Naive thymus-derived CD4-positive, alpha-beta T cell (primary cell): ENCODE measurements at regions of chr11 and their contacts with region 1.

Region 1: GRCh38 chr11:36289226-36289852 is at the start of gene COMMD9:
- DNase-seq: peak; percentile 78 to 93 (median 91)
- ATAC-seq: peak; percentile 98
- H3K4me3 ChIP-seq: peak within 1 kb of the TSS; percentile 98
- H3K4me3 Mint-ChIP-seq: peak within 1 kb of the TSS; percentile 87 to 99 (median 94)
- H3K27ac ChIP-seq: peak within 1 kb of the TSS; percentile 58
- H3K27ac Mint-ChIP-seq: peak within 1 kb of the TSS; percentile 85 to 98 (median 90)
- H3K4me1 ChIP-seq: peaks cover 6 to 14% of the 10 kb centered on the region in 2 donors
- H3K4me1 Mint-ChIP-seq: peaks cover 24 to 55% (median 42%) of the 10 kb centered on the region in 7 donors
- H3K27me3 ChIP-seq: no peaks in the 10 kb centered on the region
- H3K27me3 Mint-ChIP-seq: no peaks in the 10 kb centered on the region
- total RNA-seq, gene COMMD9: 42.6 to 62.2 (median 45.9) TPM

Region 2: GRCh38 chr11:36354221-36355003 is 65.1 kb after region 1 on chr11:
- CTCF ChIA-PET with region 1: no interaction called
- POLR2A ChIA-PET with region 1: no interaction called
- intact Hi-C with region 1: loop called in 1 of 2 experiments (anchors 1 kb)
- DNase-seq: no peak
- ATAC-seq: no peak
- H3K4me3 ChIP-seq: no peak overlapping the region
- H3K4me3 Mint-ChIP-seq: peak overlapping the region in 1 of 10 donors; percentile 45
- H3K27ac ChIP-seq: no peak overlapping the region
- H3K27ac Mint-ChIP-seq: peak overlapping the region in 1 of 9 donors; percentile 18
- H3K4me1 ChIP-seq: peaks cover 0 to 36% of the 10 kb centered on the region in 2 donors
- H3K4me1 Mint-ChIP-seq: peaks cover 0 to 56% (median 4%) of the 10 kb centered on the region in 7 donors
- H3K27me3 ChIP-seq: no peaks in the 10 kb centered on the region
- H3K27me3 Mint-ChIP-seq: peaks cover 9 to 35% (median 25%) of the 10 kb centered on the region in 5 donors

Region 3: GRCh38 chr11:36478700-36479329 is 189.5 kb after region 1 on chr11:
- CTCF ChIA-PET with region 1: no interaction called
- POLR2A ChIA-PET with region 1: no interaction called
- intact Hi-C with region 1: loop called in 1 of 2 experiments (anchors 1 kb)
- DNase-seq: peak in 3 of 9 donors; percentile 6 to 27 (median 12)
- ATAC-seq: peak; percentile 47
- H3K4me3 ChIP-seq: no peak overlapping the region
- H3K4me3 Mint-ChIP-seq: no peak overlapping the region
- H3K27ac ChIP-seq: no peak overlapping the region
- H3K27ac Mint-ChIP-seq: no peak overlapping the region
- H3K4me1 ChIP-seq: no peaks in the 10 kb centered on the region
- H3K4me1 Mint-ChIP-seq: peaks cover 0 to 6% (median 0%) of the 10 kb centered on the region in 7 donors
- H3K27me3 ChIP-seq: no peaks in the 10 kb centered on the region
- H3K27me3 Mint-ChIP-seq: no peaks in the 10 kb centered on the region

Region 4: GRCh38 chr11:36509694-36510566 is 220.6 kb after region 1 on chr11 and contains the start of gene TRAF6:
- CTCF ChIA-PET with region 1: no interaction called
- POLR2A ChIA-PET with region 1: interaction called, 6 read pairs
- intact Hi-C with region 1: loop called (anchors 1 kb)
- DNase-seq: peak; percentile 75 to 95 (median 87)
- ATAC-seq: peak; percentile 99
- H3K4me3 ChIP-seq: peak within 1 kb of the TSS; percentile 82
- H3K4me3 Mint-ChIP-seq: peak within 1 kb of the TSS; percentile 89 to 99 (median 97)
- H3K27ac ChIP-seq: peak within 1 kb of the TSS; percentile 84
- H3K27ac Mint-ChIP-seq: peak within 1 kb of the TSS; percentile 87 to 98 (median 94)
- H3K4me1 ChIP-seq: peaks cover 5 to 13% of the 10 kb centered on the region in 2 donors
- H3K4me1 Mint-ChIP-seq: peaks cover 21 to 42% (median 31%) of the 10 kb centered on the region in 7 donors
- H3K27me3 ChIP-seq: no peaks in the 10 kb centered on the region
- H3K27me3 Mint-ChIP-seq: peaks cover 3 to 23% (median 9%) of the 10 kb centered on the region in 5 donors
- total RNA-seq, gene TRAF6: 14.7 to 22.2 (median 20.6) TPM

Region 5: GRCh38 chr11:36564376-36565030 is 275.2 kb after region 1 on chr11:
- CTCF ChIA-PET with region 1: no interaction called
- POLR2A ChIA-PET with region 1: no interaction called
- intact Hi-C with region 1: loop called in 1 of 2 experiments (anchors 1 kb)
- DNase-seq: peak in 7 of 9 donors; percentile 7 to 55 (median 33)
- ATAC-seq: peak; percentile 75
- H3K4me3 ChIP-seq: no peak overlapping the region
- H3K4me3 Mint-ChIP-seq: peak overlapping the region; percentile 27 to 87 (median 75)
- H3K27ac ChIP-seq: no peak overlapping the region
- H3K27ac Mint-ChIP-seq: no peak overlapping the region
- H3K4me1 ChIP-seq: peaks cover 0 to 7% of the 10 kb centered on the region in 2 donors
- H3K4me1 Mint-ChIP-seq: peaks cover 4 to 14% (median 6%) of the 10 kb centered on the region in 7 donors
- H3K27me3 ChIP-seq: no peaks in the 10 kb centered on the region
- H3K27me3 Mint-ChIP-seq: peaks cover 24 to 65% (median 34%) of the 10 kb centered on the region in 5 donors

Region 6: DNA sequence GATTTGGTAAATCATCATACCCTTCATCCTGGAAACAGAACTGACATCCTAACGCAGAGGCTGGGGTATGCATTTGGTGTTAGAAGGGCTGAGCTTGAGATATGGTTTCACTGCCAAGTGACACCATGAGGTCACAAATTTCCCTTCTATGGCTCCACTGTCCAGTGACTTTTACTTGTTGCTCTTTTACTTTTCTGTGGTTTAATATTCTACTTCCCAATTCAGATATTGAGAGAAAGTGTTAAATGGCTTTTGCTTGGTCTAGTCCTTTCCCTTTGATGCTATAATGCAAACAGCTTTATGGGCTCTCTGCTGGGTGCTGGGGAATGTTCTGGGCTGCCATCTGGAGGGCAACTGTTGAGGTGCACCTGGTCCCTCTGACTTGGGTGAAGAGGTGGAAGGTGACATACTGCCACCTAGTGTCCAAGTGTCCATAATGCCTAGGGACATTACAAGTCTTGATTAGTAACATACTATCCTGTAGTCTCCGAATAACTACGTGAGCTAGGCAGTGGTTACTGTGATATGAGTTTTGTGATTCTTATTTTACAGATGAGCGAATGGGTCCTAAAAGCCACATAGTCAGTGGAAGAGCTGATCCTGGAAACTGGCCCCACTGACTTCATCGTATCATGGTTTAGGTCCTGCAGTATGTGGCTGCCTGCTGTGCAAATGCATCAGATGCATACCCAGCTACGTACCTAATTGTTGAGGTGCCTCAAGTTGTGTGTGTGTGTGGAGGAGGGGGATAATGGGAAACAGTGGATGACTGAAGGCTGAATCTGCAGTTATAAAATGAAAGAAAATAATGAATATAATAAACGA is 457.8 kb after region 1 on chr11:
- CTCF ChIA-PET with region 1: no interaction called
- POLR2A ChIA-PET with region 1: no interaction called
- intact Hi-C with region 1: loop called in 1 of 2 experiments (anchors 1 kb)
- DNase-seq: peak; percentile 45 to 84 (median 68)
- ATAC-seq: peak; percentile 100
- H3K4me3 ChIP-seq: no peak overlapping the region
- H3K4me3 Mint-ChIP-seq: no peak overlapping the region
- H3K27ac ChIP-seq: no peak overlapping the region
- H3K27ac Mint-ChIP-seq: no peak overlapping the region
- H3K4me1 ChIP-seq: no peaks in the 10 kb centered on the region
- H3K4me1 Mint-ChIP-seq: peaks cover 0 to 9% (median 3%) of the 10 kb centered on the region in 7 donors
- H3K27me3 ChIP-seq: no peaks in the 10 kb centered on the region
- H3K27me3 Mint-ChIP-seq: peaks cover 21 to 30% (median 25%) of the 10 kb centered on the region in 5 donors